ENCODE measurements at regions of chr12 and their contacts with region 1.

Region 1: GRCh38 chr12:27523642-27524493 is at the start of gene PPFIBP1:
- DNase-seq: peak; percentile 81 to 95 (median 88)
- ATAC-seq: peak; percentile 99
- H3K4me3 ChIP-seq: peak within 1 kb of the TSS; percentile 78
- H3K4me3 Mint-ChIP-seq: peak within 1 kb of the TSS; percentile 95 to 99 (median 98)
- H3K27ac ChIP-seq: peak within 1 kb of the TSS; percentile 82
- H3K27ac Mint-ChIP-seq: peak within 1 kb of the TSS; percentile 89 to 99 (median 98)
- H3K4me1 ChIP-seq: peaks cover 5 to 7% of the 10 kb centered on the region in 2 donors
- H3K4me1 Mint-ChIP-seq: peaks cover 12 to 43% (median 28%) of the 10 kb centered on the region in 7 donors
- H3K27me3 ChIP-seq: no peaks in the 10 kb centered on the region
- H3K27me3 Mint-ChIP-seq: peaks cover 0 to 39% (median 7%) of the 10 kb centered on the region in 5 donors
- total RNA-seq, gene PPFIBP1: 3.3 to 29.2 (median 7.5) TPM

Region 2: GRCh38 chr12:26732005-26732908 is 791.6 kb before region 1 on chr12:
- CTCF ChIA-PET with region 1: no interaction called
- POLR2A ChIA-PET with region 1: no interaction called
- intact Hi-C with region 1: no loop called
- DNase-seq: no peak
- ATAC-seq: peak; percentile 79
- H3K4me3 ChIP-seq: no peak overlapping the region
- H3K4me3 Mint-ChIP-seq: peak overlapping the region in 1 of 10 donors; percentile 5
- H3K27ac ChIP-seq: no peak overlapping the region
- H3K27ac Mint-ChIP-seq: peak overlapping the region in 1 of 9 donors; percentile 12
- H3K4me1 ChIP-seq: peaks cover 0 to 6% of the 10 kb centered on the region in 2 donors
- H3K4me1 Mint-ChIP-seq: peaks cover 32 to 83% (median 66%) of the 10 kb centered on the region in 7 donors
- H3K27me3 ChIP-seq: no peaks in the 10 kb centered on the region
- H3K27me3 Mint-ChIP-seq: no peaks in the 10 kb centered on the region

Region 3: GRCh38 chr12:26832822-26833742 is 690.8 kb before region 1 on chr12 and contains the start of gene ITPR2:
- CTCF ChIA-PET with region 1: no interaction called
- POLR2A ChIA-PET with region 1: no interaction called
- intact Hi-C with region 1: loop called (anchors 2 to 10 kb)
- DNase-seq: peak; percentile 81 to 94 (median 89)
- ATAC-seq: peak; percentile 96
- H3K4me3 ChIP-seq: peak within 1 kb of the TSS; percentile 96
- H3K4me3 Mint-ChIP-seq: peak within 1 kb of the TSS; percentile 92 to 100 (median 98)
- H3K27ac ChIP-seq: peak within 1 kb of the TSS; percentile 92
- H3K27ac Mint-ChIP-seq: peak within 1 kb of the TSS; percentile 95 to 99 (median 98)
- H3K4me1 ChIP-seq: peaks cover 12 to 16% of the 10 kb centered on the region in 2 donors
- H3K4me1 Mint-ChIP-seq: peaks cover 26 to 51% (median 45%) of the 10 kb centered on the region in 7 donors
- H3K27me3 ChIP-seq: no peaks in the 10 kb centered on the region
- H3K27me3 Mint-ChIP-seq: no peaks in the 10 kb centered on the region
- total RNA-seq, gene ITPR2: 44.9 to 71.5 (median 59.2) TPM

Region 4: DNA sequence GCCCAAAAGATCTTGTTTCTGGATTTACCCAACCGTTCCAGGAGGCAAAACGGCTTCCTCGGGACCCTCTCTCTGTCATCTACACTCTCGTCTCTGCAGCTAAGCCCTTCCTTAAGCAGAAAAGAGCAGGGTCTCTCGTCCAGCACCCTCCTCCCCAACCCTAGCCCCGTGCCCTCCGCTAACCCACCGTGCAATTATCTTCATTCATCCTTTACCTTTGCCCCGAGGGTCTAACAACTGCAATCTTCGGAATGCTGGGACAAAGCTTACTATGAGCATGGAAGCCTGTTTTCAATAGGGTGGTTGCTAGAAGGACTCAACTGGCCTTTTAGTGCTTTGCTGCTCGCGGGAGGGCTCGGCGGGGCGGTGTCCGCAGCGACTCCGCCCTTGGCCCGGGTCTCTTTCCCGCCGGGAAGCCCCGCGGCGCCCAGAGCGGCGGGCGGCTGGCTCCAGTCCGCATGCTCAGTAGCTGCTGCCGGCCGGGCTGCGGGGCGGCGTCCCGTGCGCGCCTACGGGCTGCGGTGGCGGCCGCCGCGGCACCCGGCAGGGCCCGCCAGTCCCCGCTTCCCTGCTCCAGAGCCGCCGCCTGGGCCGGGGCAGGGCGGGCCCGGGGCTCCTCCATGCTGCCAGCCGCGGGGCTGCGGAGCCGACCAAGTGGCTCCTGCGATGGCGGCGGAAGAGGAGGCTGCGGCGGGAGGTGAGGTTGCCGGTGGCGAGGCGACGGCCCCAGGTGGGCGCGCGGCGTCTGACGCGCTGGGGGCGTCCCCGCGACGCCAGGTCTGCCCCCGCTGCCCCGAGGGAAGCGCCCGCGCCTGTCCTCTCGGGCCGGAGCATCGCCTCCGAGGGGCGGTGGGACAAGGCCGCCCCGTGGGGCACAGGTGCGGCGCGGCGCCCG is 191.2 kb before region 1 on chr12 and contains the start of gene BMAL2:
- CTCF ChIA-PET with region 1: no interaction called
- POLR2A ChIA-PET with region 1: no interaction called
- intact Hi-C with region 1: loop called in 1 of 2 experiments (anchors 5 kb)
- DNase-seq: peak in 8 of 9 donors; percentile 12 to 70 (median 16)
- ATAC-seq: peak; percentile 62
- H3K4me3 ChIP-seq: peak within 1 kb of the TSS; percentile 46
- H3K4me3 Mint-ChIP-seq: peak within 1 kb of the TSS; percentile 80 to 97 (median 88)
- H3K27ac ChIP-seq: no peak within 1 kb of the TSS
- H3K27ac Mint-ChIP-seq: peak within 1 kb of the TSS in 1 of 9 donors; percentile 94
- H3K4me1 ChIP-seq: peaks cover 4% of the 10 kb centered on the region in 2 donors
- H3K4me1 Mint-ChIP-seq: peaks cover 7 to 51% (median 15%) of the 10 kb centered on the region in 7 donors
- H3K27me3 ChIP-seq: peaks cover 0 to 8% of the 10 kb centered on the region in 2 donors
- H3K27me3 Mint-ChIP-seq: peaks cover 7 to 48% (median 46%) of the 10 kb centered on the region in 5 donors
- total RNA-seq, gene BMAL2: 0.19 to 37.7 (median 0.41) TPM in 4 of 5 experiments, not detected in the other

Region 5: GRCh38 chr12:27534060-27534764 is 10.3 kb after region 1 on chr12:
- CTCF ChIA-PET with region 1: no interaction called
- POLR2A ChIA-PET with region 1: interaction called, 7 read pairs
- intact Hi-C with region 1: loop called (anchors 1 kb)
- DNase-seq: peak in 8 of 9 donors; percentile 26 to 62 (median 54)
- ATAC-seq: peak; percentile 83
- H3K4me3 ChIP-seq: no peak overlapping the region
- H3K4me3 Mint-ChIP-seq: peak overlapping the region; percentile 2 to 78 (median 60)
- H3K27ac ChIP-seq: no peak overlapping the region
- H3K27ac Mint-ChIP-seq: peak overlapping the region; percentile 2 to 86 (median 62)
- H3K4me1 ChIP-seq: peaks cover 11 to 16% of the 10 kb centered on the region in 2 donors
- H3K4me1 Mint-ChIP-seq: peaks cover 18 to 49% (median 39%) of the 10 kb centered on the region in 7 donors
- H3K27me3 ChIP-seq: no peaks in the 10 kb centered on the region
- H3K27me3 Mint-ChIP-seq: peaks cover 0 to 10% (median 0%) of the 10 kb centered on the region in 5 donors

Region 6: DNA sequence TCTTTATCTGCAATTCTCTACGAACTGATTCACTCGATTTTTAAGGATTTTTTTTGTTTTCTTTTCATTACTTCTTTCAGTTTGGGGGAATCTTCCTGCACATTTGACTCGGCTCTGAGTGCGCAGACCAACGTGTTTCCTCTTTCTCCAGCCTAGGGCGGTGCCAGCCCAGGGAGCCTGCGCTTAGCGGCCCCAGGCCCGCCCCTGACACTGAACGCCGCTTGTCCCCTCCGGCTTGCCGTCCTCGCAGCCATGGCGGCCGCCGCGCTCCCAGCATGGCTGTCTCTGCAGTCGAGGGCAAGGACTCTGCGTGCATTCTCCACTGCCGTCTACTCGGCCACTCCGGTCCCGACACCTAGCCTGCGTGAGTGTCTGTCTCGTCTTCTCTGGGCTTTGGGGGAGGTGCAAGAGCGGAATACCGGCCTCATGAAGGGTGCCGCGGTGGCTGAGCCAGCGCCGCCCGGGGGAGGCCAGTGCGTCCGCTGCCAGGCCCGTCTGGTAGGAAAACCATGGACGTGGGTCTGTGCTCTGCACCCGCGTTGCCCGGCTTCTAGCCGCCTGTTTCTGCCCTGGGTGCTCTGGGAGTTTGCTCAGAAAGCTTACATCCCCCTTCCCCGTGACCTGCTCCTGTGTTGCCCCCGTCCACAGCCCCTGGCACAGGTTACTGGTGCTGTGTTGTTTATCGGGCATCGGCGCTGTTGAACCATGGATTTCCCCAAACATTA is 186.9 kb after region 1 on chr12 and contains the start of gene MRPS35:
- CTCF ChIA-PET with region 1: no interaction called
- POLR2A ChIA-PET with region 1: interaction called, 3 read pairs
- intact Hi-C with region 1: loop called (anchors 1 kb)
- DNase-seq: peak; percentile 86 to 94 (median 92)
- ATAC-seq: peak; percentile 100
- H3K4me3 ChIP-seq: peak within 1 kb of the TSS; percentile 98
- H3K4me3 Mint-ChIP-seq: peak within 1 kb of the TSS; percentile 94 to 100 (median 98)
- H3K27ac ChIP-seq: peak within 1 kb of the TSS; percentile 85
- H3K27ac Mint-ChIP-seq: peak within 1 kb of the TSS; percentile 91 to 100 (median 98)
- H3K4me1 ChIP-seq: peaks cover 7 to 13% of the 10 kb centered on the region in 2 donors
- H3K4me1 Mint-ChIP-seq: peaks cover 21 to 46% (median 39%) of the 10 kb centered on the region in 7 donors
- H3K27me3 ChIP-seq: no peaks in the 10 kb centered on the region
- H3K27me3 Mint-ChIP-seq: peaks cover 0 to 18% (median 0%) of the 10 kb centered on the region in 5 donors
- total RNA-seq, gene MRPS35: 19.9 to 35.7 (median 23.5) TPM

Region 7: GRCh38 chr12:28190321-28191050 is 666.6 kb after region 1 on chr12 and contains the start of gene CCDC91:
- CTCF ChIA-PET with region 1: no interaction called
- POLR2A ChIA-PET with region 1: no interaction called
- intact Hi-C with region 1: loop called (anchors 1 to 5 kb)
- DNase-seq: peak; percentile 83 to 95 (median 90)
- ATAC-seq: peak; percentile 90
- H3K4me3 ChIP-seq: peak within 1 kb of the TSS; percentile 80
- H3K4me3 Mint-ChIP-seq: peak within 1 kb of the TSS; percentile 88 to 98 (median 96)
- H3K27ac ChIP-seq: peak within 1 kb of the TSS; percentile 98
- H3K27ac Mint-ChIP-seq: peak within 1 kb of the TSS; percentile 98 to 100 (median 99)
- H3K4me1 ChIP-seq: peaks cover 19 to 25% of the 10 kb centered on the region in 2 donors
- H3K4me1 Mint-ChIP-seq: peaks cover 27 to 79% (median 68%) of the 10 kb centered on the region in 7 donors
- H3K27me3 ChIP-seq: no peaks in the 10 kb centered on the region
- H3K27me3 Mint-ChIP-seq: no peaks in the 10 kb centered on the region
- total RNA-seq, gene CCDC91: 20.2 to 105 (median 70.4) TPM

Measured in naive thymus-derived CD4-positive, alpha-beta T cell (primary cell).